ENCODE measurements at regions of chr16 and their contacts with region 1.

Region 1: GRCh38 chr16:2142942-2143877 is 5.2 kb upstream of the RAB26 start:
- DNase-seq: no peak
- H3K4me3 ChIP-seq: no peak overlapping the region
- H3K27ac ChIP-seq: no peak overlapping the region
- H3K4me1 ChIP-seq: peaks cover 0 to 11% (median 4%) of the 10 kb centered on the region in 4 donors
- H3K27me3 ChIP-seq: no peaks in the 10 kb centered on the region
- CTCF ChIP-seq: no peak

Region 2: DNA sequence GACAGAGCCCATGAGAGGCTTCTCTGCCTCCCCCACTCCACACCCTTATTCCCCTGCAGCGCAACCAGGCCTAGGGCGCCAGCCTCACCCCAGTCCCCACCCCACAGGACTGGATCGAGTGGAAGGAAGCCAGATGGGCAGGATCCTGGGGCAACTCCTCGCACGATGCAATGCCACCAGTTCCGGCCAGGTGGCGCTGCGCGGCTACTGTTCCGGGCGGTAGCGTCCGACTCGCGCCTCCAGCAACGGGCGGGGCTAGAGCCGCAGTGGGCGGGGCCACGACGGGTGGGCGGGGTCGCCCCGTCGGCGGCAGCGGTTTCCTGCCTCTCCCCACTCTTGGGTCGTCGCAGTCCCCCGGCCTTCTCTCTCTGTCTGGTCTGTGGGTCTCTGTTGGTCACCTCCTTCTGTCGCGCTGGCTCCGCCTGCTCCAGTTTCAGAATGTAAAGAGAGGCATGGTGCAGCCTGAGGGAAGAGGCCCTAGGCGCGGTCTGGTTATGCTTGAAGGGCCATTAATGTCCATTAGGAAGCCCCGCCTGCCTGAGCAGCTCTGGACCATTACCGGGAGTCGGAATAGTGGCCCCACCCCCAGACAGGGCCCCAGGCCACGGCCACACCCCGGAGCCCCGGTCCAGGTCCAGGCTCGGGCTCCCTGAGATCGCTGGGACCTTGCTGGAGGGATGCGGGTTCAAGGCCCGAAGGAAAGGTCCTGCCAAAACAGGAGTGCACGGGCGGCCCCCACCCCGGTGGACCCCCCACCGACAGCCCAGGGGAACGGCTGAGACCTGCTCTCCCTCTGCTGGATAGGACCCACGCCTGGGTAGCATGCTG is 119.9 kb before region 1 on chr16:
- intact Hi-C with region 1: loop called (anchors 5 kb)
- DNase-seq: peak; percentile 88 to 94
- H3K4me3 ChIP-seq: peak overlapping the region; percentile 33 to 43
- H3K27ac ChIP-seq: peak overlapping the region; percentile 53 to 67
- H3K4me1 ChIP-seq: peaks cover 0 to 58% (median 49%) of the 10 kb centered on the region in 4 donors
- H3K27me3 ChIP-seq: peaks cover 0 to 38% of the 10 kb centered on the region in 2 donors
- CTCF ChIP-seq: peak; percentile 96 to 98

Region 3: DNA sequence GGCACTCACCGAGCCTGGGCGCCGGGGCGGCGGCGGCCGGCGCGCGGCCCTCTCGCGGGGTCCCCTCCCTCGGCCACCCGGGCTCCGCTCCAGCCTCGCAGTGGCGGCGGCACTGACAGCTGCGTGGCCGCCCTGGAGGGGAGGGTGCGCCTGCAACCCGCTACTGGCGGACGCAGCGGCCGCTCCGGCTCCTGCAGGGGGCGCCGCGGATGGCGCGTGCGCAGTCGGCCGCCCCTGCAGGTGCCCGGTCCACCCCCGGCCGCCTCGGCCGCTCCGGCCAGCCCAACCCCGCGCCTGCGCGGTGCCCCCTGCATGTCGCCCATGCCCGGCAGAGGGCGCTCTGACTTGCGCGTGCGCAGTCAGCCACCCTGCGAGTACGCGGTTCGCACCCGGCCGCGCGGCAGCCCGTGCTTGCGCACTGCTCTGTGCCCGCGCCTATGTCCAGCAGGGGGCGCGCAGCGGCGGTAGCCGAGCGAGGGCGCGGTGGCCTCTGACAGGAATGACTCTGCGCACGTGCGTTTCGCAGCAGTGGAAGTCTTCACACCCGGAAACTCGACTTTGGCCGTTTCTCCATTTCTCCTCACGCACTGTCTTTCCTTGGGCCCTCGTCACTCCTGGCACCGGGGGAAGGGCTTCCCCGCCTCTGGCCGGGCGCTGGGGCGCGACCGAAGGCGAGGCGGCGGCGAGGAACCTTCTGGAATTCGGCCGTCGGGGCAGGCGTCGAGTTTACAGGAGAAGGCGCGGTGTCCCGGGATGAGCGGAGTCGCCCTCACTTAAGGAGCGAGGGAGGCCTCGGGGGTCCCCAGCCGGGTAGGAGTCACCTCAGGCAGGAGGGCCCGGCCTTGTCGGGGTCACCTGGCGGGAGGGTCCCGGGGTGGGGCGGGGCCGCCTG is 197.6 kb after region 1 on chr16 and contains the start of gene ABCA3:
- intact Hi-C with region 1: no loop called
- DNase-seq: peak; percentile 85 to 97
- H3K4me3 ChIP-seq: peak within 1 kb of the TSS; percentile 73 to 87
- H3K27ac ChIP-seq: peak within 1 kb of the TSS; percentile 62 to 66
- H3K4me1 ChIP-seq: peaks cover 0 to 30% (median 24%) of the 10 kb centered on the region in 4 donors
- H3K27me3 ChIP-seq: no peaks in the 10 kb centered on the region
- CTCF ChIP-seq: peak; percentile 100

Measured in tibial artery (tissue), 4 donors.